K562 (cell line): ENCODE measurements at regions of chr10 and their contacts with region 1.

Region 1: DNA sequence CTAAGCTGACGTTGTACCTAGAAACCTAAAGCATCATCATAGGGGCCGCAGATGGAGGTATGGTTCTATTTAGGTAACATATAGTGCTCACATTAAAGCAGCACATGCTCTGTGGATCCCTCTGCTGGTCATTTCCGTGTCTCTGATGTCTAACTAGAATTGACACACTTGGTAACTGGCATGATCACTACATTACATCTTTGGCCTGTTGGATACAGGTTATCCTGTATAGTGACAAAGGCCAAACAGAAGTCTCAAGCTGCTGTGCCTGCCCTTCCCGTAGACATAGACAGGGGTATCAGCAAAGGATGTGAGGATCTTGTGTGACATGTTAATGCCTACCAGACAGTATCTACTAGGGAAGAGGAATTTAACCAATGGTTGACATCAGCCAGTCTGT is 51.2 kb downstream of the KIF5B start:
- DNase-seq: peak; percentile 32 to 78 (median 42)
- ATAC-seq: peak; percentile 91
- H3K4me3 ChIP-seq: no peak overlapping the region
- H3K27ac ChIP-seq: no peak overlapping the region
- H3K4me1 ChIP-seq: peaks cover 0 to 5% of the 10 kb centered on the region in 2 experiments; a peak in 2 of 5 replicates
- H3K27me3 ChIP-seq: no peaks in the 10 kb centered on the region
- CTCF ChIP-seq: peak; percentile 62 to 79 (median 74)
- EP300 ChIP-seq: no peak
- POLR2A ChIP-seq: 0 out of 2 replicates have a peak, but pooled peaks have one; percentile 20
- RAD21 ChIP-seq: peak; percentile 56 to 84

Region 2: GRCh38 chr10:31836569-31837406 is 168.3 kb before region 1 on chr10:
- CTCF ChIA-PET with region 1: interaction called, 3 read pairs
- POLR2A ChIA-PET with region 1: no interaction called
- in situ Hi-C with region 1: no loop called
- intact Hi-C with region 1: loop called (anchors 2 kb)
- DNase-seq: peak; percentile 25 to 57 (median 32)
- ATAC-seq: peak; percentile 93
- H3K4me3 ChIP-seq: no peak overlapping the region
- H3K27ac ChIP-seq: no peak overlapping the region
- H3K4me1 ChIP-seq: no peaks in the 10 kb centered on the region
- H3K27me3 ChIP-seq: no peaks in the 10 kb centered on the region
- CTCF ChIP-seq: peak; percentile 61 to 83 (median 77)
- EP300 ChIP-seq: no peak
- POLR2A ChIP-seq: no peak
- RAD21 ChIP-seq: peak; percentile 52 to 78

Region 3: DNA sequence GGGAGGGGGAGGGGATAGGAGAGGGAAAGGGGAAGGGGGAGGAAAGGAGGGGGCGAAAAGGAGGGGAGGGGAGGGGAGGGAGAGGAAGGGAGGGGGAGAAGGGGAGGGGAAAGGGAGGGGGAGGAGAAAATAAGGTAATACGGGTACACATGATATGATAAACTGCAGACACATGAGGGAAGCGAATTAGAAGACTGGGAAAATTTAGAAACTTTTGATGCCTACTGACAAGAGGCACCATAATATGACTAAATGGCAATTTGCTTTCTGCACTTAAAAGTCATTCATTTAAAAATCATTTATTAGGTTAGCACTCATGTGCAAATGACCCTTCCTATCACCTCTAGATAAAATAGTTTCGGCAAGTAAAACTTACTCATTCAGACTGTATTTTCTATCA is 150.0 kb before region 1 on chr10:
- CTCF ChIA-PET with region 1: interaction called, 7 read pairs
- POLR2A ChIA-PET with region 1: no interaction called
- in situ Hi-C with region 1: loop called (anchors 5 kb)
- intact Hi-C with region 1: no loop called
- DNase-seq: no peak
- ATAC-seq: no peak
- H3K4me3 ChIP-seq: no peak overlapping the region
- H3K27ac ChIP-seq: no peak overlapping the region
- H3K4me1 ChIP-seq: no peaks in the 10 kb centered on the region
- H3K27me3 ChIP-seq: no peaks in the 10 kb centered on the region
- CTCF ChIP-seq: no peak
- EP300 ChIP-seq: no peak
- POLR2A ChIP-seq: no peak
- RAD21 ChIP-seq: no peak

Region 4: DNA sequence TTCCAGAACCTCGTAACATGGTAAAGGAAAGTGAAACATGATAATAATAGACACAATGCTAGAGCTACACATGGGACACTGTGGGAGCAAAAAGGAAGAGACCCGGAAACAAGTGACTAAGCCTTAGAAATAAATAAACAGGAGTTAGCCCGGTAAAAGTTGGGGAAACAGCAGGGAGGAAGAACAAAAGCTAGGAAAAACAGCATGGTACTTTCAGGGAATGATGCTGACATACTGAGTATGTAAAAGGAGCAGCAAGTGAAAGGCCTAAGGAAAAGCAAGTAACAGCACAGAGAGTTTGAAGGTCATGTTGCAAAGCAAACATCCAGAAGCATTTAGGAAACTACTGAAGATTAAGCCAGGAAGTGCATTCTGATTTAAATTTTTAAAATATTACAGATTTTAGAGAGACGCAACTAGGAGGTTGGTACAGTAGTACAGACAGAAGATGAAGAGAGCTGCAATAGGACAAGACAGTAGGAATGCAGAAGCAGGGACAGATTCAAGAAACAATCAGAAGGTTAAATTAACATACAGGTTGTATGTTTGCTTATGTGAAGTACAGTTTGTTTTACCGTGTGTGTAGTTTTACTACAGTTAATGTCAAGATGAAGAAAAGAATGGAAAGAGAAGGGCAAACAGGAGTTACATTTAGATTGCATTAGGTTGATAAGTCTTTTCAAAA is 140.1 kb before region 1 on chr10:
- CTCF ChIA-PET with region 1: interaction called, 3 read pairs
- POLR2A ChIA-PET with region 1: no interaction called
- in situ Hi-C with region 1: no loop called
- intact Hi-C with region 1: loop called (anchors 1 kb)
- DNase-seq: no peak
- ATAC-seq: no peak
- H3K4me3 ChIP-seq: no peak overlapping the region
- H3K27ac ChIP-seq: no peak overlapping the region
- H3K4me1 ChIP-seq: peaks cover 0 to 5% of the 10 kb centered on the region in 2 experiments; a peak in 2 of 5 replicates
- H3K27me3 ChIP-seq: no peaks in the 10 kb centered on the region
- CTCF ChIP-seq: no peak
- EP300 ChIP-seq: no peak
- POLR2A ChIP-seq: no peak
- RAD21 ChIP-seq: no peak

Region 5: DNA sequence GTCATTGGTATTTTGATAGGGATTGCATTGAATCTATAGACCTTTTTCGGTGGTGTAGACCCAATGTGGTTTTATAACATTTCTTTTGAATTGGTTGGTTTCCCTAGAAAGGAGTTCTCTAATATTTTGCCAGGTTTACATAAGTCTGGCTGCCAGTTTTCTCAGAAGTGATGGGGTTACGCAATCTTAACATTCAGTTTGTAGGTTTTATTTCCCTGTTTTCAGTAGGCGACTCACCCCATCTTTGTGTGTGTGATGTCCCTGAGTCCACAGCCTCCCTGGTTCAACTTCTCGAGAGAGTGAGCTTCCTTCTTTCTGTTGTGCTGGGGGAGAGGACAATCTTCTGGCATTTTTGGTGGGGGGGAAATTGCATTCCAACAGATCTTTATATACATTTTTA is 60.8 kb after region 1 on chr10:
- CTCF ChIA-PET with region 1: no interaction called
- POLR2A ChIA-PET with region 1: no interaction called
- in situ Hi-C with region 1: no loop called
- intact Hi-C with region 1: no loop called
- DNase-seq: no peak
- ATAC-seq: no peak
- H3K4me3 ChIP-seq: no peak overlapping the region
- H3K27ac ChIP-seq: no peak overlapping the region
- H3K4me1 ChIP-seq: no peaks in the 10 kb centered on the region
- H3K27me3 ChIP-seq: no peaks in the 10 kb centered on the region
- CTCF ChIP-seq: no peak
- EP300 ChIP-seq: no peak
- POLR2A ChIP-seq: no peak
- RAD21 ChIP-seq: no peak